Endothelial cell of umbilical vein (primary cell): ENCODE measurements at regions of chr7 and their contacts with region 1.

Region 1: GRCh38 chr7:74173866-74174605 is at the start of gene EIF4H:
- DNase-seq: peak; percentile 96
- H3K4me3 ChIP-seq: peak within 1 kb of the TSS; percentile 72 to 98 (median 95)
- H3K27ac ChIP-seq: peak within 1 kb of the TSS; percentile 84
- H3K4me1 ChIP-seq: peaks cover 33% of the 10 kb centered on the region
- H3K27me3 ChIP-seq: no peaks in the 10 kb centered on the region
- CTCF ChIP-seq: no peak
- POLR2A ChIP-seq: peak; percentile 92
- total RNA-seq, gene EIF4H: 415 and 434 TPM in 2 replicates

Region 2: GRCh38 chr7:73879977-73880681 is 293.9 kb before region 1 on chr7:
- CTCF ChIA-PET with region 1: no interaction called
- POLR2A ChIA-PET with region 1: no interaction called
- dilution Hi-C with region 1: no loop called
- intact Hi-C with region 1: no loop called
- DNase-seq: no peak
- H3K4me3 ChIP-seq: no peak overlapping the region
- H3K27ac ChIP-seq: no peak overlapping the region
- H3K4me1 ChIP-seq: peaks cover 9% of the 10 kb centered on the region
- H3K27me3 ChIP-seq: peaks cover 8 to 31% of the 10 kb centered on the region in 2 experiments
- CTCF ChIP-seq: no peak
- POLR2A ChIP-seq: no peak

Region 3: GRCh38 chr7:74094224-74095101 is 79.6 kb before region 1 on chr7:
- CTCF ChIA-PET with region 1: interaction called, 4 read pairs
- POLR2A ChIA-PET with region 1: no interaction called
- dilution Hi-C with region 1: no loop called
- intact Hi-C with region 1: loop called (anchors 2 kb)
- DNase-seq: peak; percentile 89
- H3K4me3 ChIP-seq: peak overlapping the region in 2 of 3 experiments; percentile 0 to 29
- H3K27ac ChIP-seq: peak overlapping the region; percentile 83
- H3K4me1 ChIP-seq: peaks cover 34% of the 10 kb centered on the region
- H3K27me3 ChIP-seq: no peaks in the 10 kb centered on the region
- CTCF ChIP-seq: no peak
- POLR2A ChIP-seq: peak; percentile 21

Region 4: GRCh38 chr7:74133671-74134048 is 40.4 kb before region 1 on chr7:
- CTCF ChIA-PET with region 1: no interaction called
- POLR2A ChIA-PET with region 1: no interaction called
- dilution Hi-C with region 1: no loop called
- intact Hi-C with region 1: loop called (anchors 5 kb)
- DNase-seq: no peak
- H3K4me3 ChIP-seq: no peak overlapping the region
- H3K27ac ChIP-seq: no peak overlapping the region
- H3K4me1 ChIP-seq: no peaks in the 10 kb centered on the region
- H3K27me3 ChIP-seq: no peaks in the 10 kb centered on the region
- CTCF ChIP-seq: no peak
- POLR2A ChIP-seq: no peak

Region 5: GRCh38 chr7:74306730-74307469 is 132.9 kb after region 1 on chr7:
- CTCF ChIA-PET with region 1: no interaction called
- POLR2A ChIA-PET with region 1: no interaction called
- dilution Hi-C with region 1: no loop called
- intact Hi-C with region 1: no loop called
- DNase-seq: peak; percentile 69
- H3K4me3 ChIP-seq: no peak overlapping the region
- H3K27ac ChIP-seq: no peak overlapping the region
- H3K4me1 ChIP-seq: peaks cover 12% of the 10 kb centered on the region
- H3K27me3 ChIP-seq: no peaks in the 10 kb centered on the region
- CTCF ChIP-seq: no peak
- POLR2A ChIP-seq: no peak